ENCODE measurements at regions of chr1 and their contacts with region 1.

Region 1: GRCh38 chr1:62230709-62231108 is 36.1 kb downstream of the L1TD1 start:
- DNase-seq: peak; percentile 95 to 100
- H3K4me3 ChIP-seq: no peak overlapping the region
- H3K27ac ChIP-seq: peak overlapping the region; percentile 85
- H3K4me1 ChIP-seq: peaks cover 58% of the 10 kb centered on the region
- H3K27me3 ChIP-seq: no peaks in the 10 kb centered on the region
- CTCF ChIP-seq: no peak

Region 2: GRCh38 chr1:62159940-62160348 is 70.8 kb before region 1 on chr1:
- CTCF ChIA-PET with region 1: interaction called, 11 read pairs
- POLR2A ChIA-PET with region 1: no interaction called
- intact Hi-C with region 1: no loop called
- DNase-seq: no peak
- H3K4me3 ChIP-seq: no peak overlapping the region
- H3K27ac ChIP-seq: no peak overlapping the region
- H3K4me1 ChIP-seq: no peaks in the 10 kb centered on the region
- H3K27me3 ChIP-seq: no peaks in the 10 kb centered on the region
- CTCF ChIP-seq: no peak

Region 3: DNA sequence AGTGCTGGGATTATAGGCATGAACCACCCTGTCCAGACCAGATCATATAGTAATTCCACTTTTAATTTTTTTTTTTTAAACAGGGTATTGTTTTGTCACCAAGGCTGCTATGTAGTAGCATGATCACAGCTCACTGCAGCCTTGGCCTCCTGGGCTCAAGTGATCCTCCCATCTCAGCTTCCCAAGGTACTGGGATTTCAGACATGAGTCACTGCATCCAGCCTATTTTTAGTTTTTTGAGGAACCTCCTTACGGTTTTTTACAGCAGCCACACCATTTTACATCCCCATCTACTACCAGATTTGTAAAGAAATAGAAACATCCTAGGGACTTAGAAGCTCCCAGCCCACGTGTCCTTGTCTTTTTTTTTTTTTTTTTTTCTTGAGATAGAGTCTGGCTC is 12.1 kb before region 1 on chr1:
- CTCF ChIA-PET with region 1: no interaction called
- POLR2A ChIA-PET with region 1: no interaction called
- intact Hi-C with region 1: no loop called
- DNase-seq: no peak
- H3K4me3 ChIP-seq: no peak overlapping the region
- H3K27ac ChIP-seq: no peak overlapping the region
- H3K4me1 ChIP-seq: no peaks in the 10 kb centered on the region
- H3K27me3 ChIP-seq: no peaks in the 10 kb centered on the region
- CTCF ChIP-seq: no peak

Region 4: GRCh38 chr1:62286786-62287224 is 56.1 kb after region 1 on chr1:
- CTCF ChIA-PET with region 1: no interaction called
- POLR2A ChIA-PET with region 1: no interaction called
- intact Hi-C with region 1: loop called (anchors 5 kb)
- DNase-seq: peak; percentile 39 to 65
- H3K4me3 ChIP-seq: no peak overlapping the region
- H3K27ac ChIP-seq: no peak overlapping the region
- H3K4me1 ChIP-seq: peaks cover 18% of the 10 kb centered on the region; the same call in 1 of the 2 replicates
- H3K27me3 ChIP-seq: no peaks in the 10 kb centered on the region
- CTCF ChIP-seq: no peak

Region 5: GRCh38 chr1:62325081-62325480 is 94.4 kb after region 1 on chr1:
- CTCF ChIA-PET with region 1: no interaction called
- POLR2A ChIA-PET with region 1: interaction called, 5 read pairs
- intact Hi-C with region 1: loop called (anchors 2 kb)
- DNase-seq: peak; percentile 77 to 79
- H3K4me3 ChIP-seq: no peak overlapping the region
- H3K27ac ChIP-seq: no peak overlapping the region
- H3K4me1 ChIP-seq: peaks cover 27% of the 10 kb centered on the region
- H3K27me3 ChIP-seq: no peaks in the 10 kb centered on the region
- CTCF ChIP-seq: no peak

Region 6: GRCh38 chr1:62407405-62408009 is 176.8 kb after region 1 on chr1:
- CTCF ChIA-PET with region 1: no interaction called
- POLR2A ChIA-PET with region 1: no interaction called
- intact Hi-C with region 1: loop called (anchors 5 kb)
- DNase-seq: no peak
- H3K4me3 ChIP-seq: no peak overlapping the region
- H3K27ac ChIP-seq: no peak overlapping the region
- H3K4me1 ChIP-seq: no peaks in the 10 kb centered on the region
- H3K27me3 ChIP-seq: no peaks in the 10 kb centered on the region
- CTCF ChIP-seq: peak; percentile 94

Region 7: DNA sequence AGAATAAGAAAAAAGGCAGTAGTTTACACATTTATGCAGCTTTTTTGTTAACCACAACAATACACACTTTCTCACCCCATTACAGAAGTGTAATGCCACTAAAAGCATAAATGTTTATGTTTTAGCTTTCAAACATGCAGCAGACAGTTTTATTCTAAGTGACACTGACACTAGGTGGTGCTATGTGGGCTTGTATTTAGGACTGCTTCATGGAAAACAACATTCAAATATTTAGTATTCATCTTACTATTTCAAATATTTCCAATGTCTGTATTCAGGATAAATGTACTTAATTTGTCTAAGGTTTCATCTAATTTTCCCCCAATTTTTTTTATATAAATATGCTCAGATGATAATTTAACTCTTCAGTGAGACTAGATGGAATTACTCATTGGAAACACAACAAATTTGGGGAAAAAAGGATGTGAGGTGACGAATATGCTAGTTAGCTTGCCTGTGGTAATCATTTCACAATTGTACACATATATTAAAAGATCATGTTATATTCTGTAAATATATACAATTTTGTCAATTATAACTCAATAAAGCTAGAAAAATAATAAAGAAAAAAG is 277.6 kb after region 1 on chr1:
- CTCF ChIA-PET with region 1: no interaction called
- POLR2A ChIA-PET with region 1: no interaction called
- intact Hi-C with region 1: no loop called
- DNase-seq: peak; percentile 3 to 37
- H3K4me3 ChIP-seq: no peak overlapping the region
- H3K27ac ChIP-seq: no peak overlapping the region
- H3K4me1 ChIP-seq: no peaks in the 10 kb centered on the region
- H3K27me3 ChIP-seq: no peaks in the 10 kb centered on the region
- CTCF ChIP-seq: peak; percentile 70